SK-N-SH (cell line): ENCODE measurements at regions of chr11 and their contacts with region 1.

Region 1: DNA sequence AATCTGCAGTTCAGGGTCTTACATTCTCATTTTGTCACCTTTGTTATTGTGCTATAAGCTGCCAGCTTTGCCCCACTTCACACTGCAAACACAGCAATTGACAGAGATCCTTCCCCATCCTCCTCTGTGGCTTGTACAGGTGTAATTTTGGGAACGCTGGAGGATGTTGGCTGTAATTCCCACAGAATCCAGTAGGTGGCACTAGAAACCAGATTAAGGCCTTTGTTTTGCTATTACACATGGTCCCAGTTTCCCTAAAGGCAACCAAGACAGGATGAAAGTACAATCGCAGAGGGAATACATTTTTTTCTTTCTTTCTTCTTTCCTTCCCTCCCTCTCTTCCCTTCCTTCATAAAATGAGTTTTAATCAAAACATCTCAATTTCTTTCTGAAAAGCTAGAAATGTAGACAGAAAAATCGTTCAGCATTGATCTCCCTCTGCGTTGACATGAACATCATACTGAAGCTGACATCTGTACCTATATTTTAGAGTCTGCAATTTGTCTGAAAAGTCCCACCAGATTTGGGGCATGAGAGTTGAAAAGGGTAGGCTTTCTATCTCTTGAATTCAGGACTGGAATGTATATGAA is 21.3 kb upstream of the NELL1 start:
- DNase-seq: peak; percentile 74
- H3K4me3 ChIP-seq: no peak overlapping the region; a peak in 1 of 4 replicates
- H3K27ac ChIP-seq: no peak overlapping the region
- H3K4me1 ChIP-seq: peaks cover 0 to under 1% of the 10 kb centered on the region in 2 experiments; a peak in 1 of 4 replicates
- H3K27me3 ChIP-seq: no peaks in the 10 kb centered on the region
- CTCF ChIP-seq: peak; percentile 90
- EP300 ChIP-seq: no peak
- RAD21 ChIP-seq: peak; percentile 96

Region 2: DNA sequence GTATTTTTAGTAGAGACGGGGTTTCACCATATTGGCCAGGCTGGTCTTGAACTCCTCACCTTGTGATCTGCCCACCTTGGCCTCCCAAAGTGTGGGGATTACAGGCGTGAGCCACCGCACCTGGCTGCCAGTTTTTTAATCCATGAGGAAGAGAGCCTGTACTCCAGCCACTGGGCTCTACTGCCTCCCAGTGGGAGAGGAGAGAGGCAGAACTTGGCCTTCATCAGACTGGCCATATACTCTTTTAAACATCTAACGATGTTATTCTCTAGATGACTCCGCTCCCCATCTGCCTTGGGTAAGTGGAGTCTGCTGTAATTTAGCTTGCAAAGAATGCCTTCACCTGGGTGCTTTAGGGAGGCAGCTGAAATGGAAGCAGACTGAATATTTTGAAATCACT is 14.0 kb before region 1 on chr11:
- CTCF ChIA-PET with region 1: interaction called, 28 read pairs
- POLR2A ChIA-PET with region 1: no interaction called
- DNase-seq: no peak
- H3K4me3 ChIP-seq: no peak overlapping the region
- H3K27ac ChIP-seq: no peak overlapping the region
- H3K4me1 ChIP-seq: no peaks in the 10 kb centered on the region; a peak in 1 of 4 replicates
- H3K27me3 ChIP-seq: no peaks in the 10 kb centered on the region
- CTCF ChIP-seq: 0 out of 2 replicates have a peak, but pooled peaks have one; percentile 8
- EP300 ChIP-seq: no peak
- RAD21 ChIP-seq: peak; percentile 50

Region 3: GRCh38 chr11:21511835-21512440 is 863.9 kb after region 1 on chr11:
- CTCF ChIA-PET with region 1: interaction called, 16 read pairs
- POLR2A ChIA-PET with region 1: no interaction called
- DNase-seq: peak; percentile 36
- H3K4me3 ChIP-seq: peak overlapping the region in 1 of 2 experiments; percentile 32; a peak in 1 of 4 replicates
- H3K27ac ChIP-seq: no peak overlapping the region
- H3K4me1 ChIP-seq: peaks cover 0 to 2% of the 10 kb centered on the region in 2 experiments; a peak in 1 of 4 replicates
- H3K27me3 ChIP-seq: no peaks in the 10 kb centered on the region
- CTCF ChIP-seq: peak; percentile 60
- EP300 ChIP-seq: no peak
- RAD21 ChIP-seq: peak; percentile 75

Region 4: GRCh38 chr11:21988477-21988876 is 1340.4 kb after region 1 on chr11:
- CTCF ChIA-PET with region 1: interaction called, 29 read pairs
- POLR2A ChIA-PET with region 1: no interaction called
- DNase-seq: peak; percentile 12
- H3K4me3 ChIP-seq: no peak overlapping the region
- H3K27ac ChIP-seq: peak overlapping the region in 1 of 2 experiments; percentile 60; a peak in 2 of 4 replicates
- H3K4me1 ChIP-seq: peaks cover 0 to 6% of the 10 kb centered on the region in 2 experiments; a peak in 1 of 4 replicates
- H3K27me3 ChIP-seq: no peaks in the 10 kb centered on the region
- CTCF ChIP-seq: no peak
- EP300 ChIP-seq: no peak
- RAD21 ChIP-seq: peak; percentile 74

Region 5: GRCh38 chr11:22130462-22131053 is 1482.5 kb after region 1 on chr11:
- CTCF ChIA-PET with region 1: interaction called, 22 read pairs
- POLR2A ChIA-PET with region 1: no interaction called
- DNase-seq: peak; percentile 23
- H3K4me3 ChIP-seq: no peak overlapping the region; a peak in 1 of 4 replicates
- H3K27ac ChIP-seq: peak overlapping the region in 1 of 2 experiments; percentile 67; a peak in 2 of 4 replicates
- H3K4me1 ChIP-seq: peaks cover 0 to 6% of the 10 kb centered on the region in 2 experiments; a peak in 1 of 4 replicates
- H3K27me3 ChIP-seq: no peaks in the 10 kb centered on the region
- CTCF ChIP-seq: peak; percentile 46
- EP300 ChIP-seq: no peak
- RAD21 ChIP-seq: peak; percentile 86

Region 6: GRCh38 chr11:22151649-22152197 is 1503.7 kb after region 1 on chr11:
- CTCF ChIA-PET with region 1: interaction called, 14 read pairs
- POLR2A ChIA-PET with region 1: no interaction called
- DNase-seq: peak; percentile 53
- H3K4me3 ChIP-seq: no peak overlapping the region
- H3K27ac ChIP-seq: peak overlapping the region in 1 of 2 experiments; percentile 56; a peak in 2 of 4 replicates
- H3K4me1 ChIP-seq: peaks cover 0 to 7% of the 10 kb centered on the region in 2 experiments; a peak in 2 of 4 replicates
- H3K27me3 ChIP-seq: no peaks in the 10 kb centered on the region
- CTCF ChIP-seq: no peak
- EP300 ChIP-seq: peak in 1 of 2 experiments; percentile 69; a peak in 2 of 4 replicates
- RAD21 ChIP-seq: no peak

Region 7: GRCh38 chr11:22157531-22158200 is 1509.6 kb after region 1 on chr11:
- CTCF ChIA-PET with region 1: interaction called, 14 read pairs
- POLR2A ChIA-PET with region 1: no interaction called
- DNase-seq: no peak
- H3K4me3 ChIP-seq: no peak overlapping the region
- H3K27ac ChIP-seq: no peak overlapping the region
- H3K4me1 ChIP-seq: no peaks in the 10 kb centered on the region
- H3K27me3 ChIP-seq: no peaks in the 10 kb centered on the region
- CTCF ChIP-seq: no peak
- EP300 ChIP-seq: no peak
- RAD21 ChIP-seq: no peak